Activated CD8-positive, alpha-beta memory T cell treated with anti-CD3 and anti-CD28 coated beads, Interleukin-2, amount 10 ng/mL, durations not matched to agents 7 days and 5 days (primary cell): ENCODE measurements at regions of chr12 and their contacts with region 1.

Region 1: DNA sequence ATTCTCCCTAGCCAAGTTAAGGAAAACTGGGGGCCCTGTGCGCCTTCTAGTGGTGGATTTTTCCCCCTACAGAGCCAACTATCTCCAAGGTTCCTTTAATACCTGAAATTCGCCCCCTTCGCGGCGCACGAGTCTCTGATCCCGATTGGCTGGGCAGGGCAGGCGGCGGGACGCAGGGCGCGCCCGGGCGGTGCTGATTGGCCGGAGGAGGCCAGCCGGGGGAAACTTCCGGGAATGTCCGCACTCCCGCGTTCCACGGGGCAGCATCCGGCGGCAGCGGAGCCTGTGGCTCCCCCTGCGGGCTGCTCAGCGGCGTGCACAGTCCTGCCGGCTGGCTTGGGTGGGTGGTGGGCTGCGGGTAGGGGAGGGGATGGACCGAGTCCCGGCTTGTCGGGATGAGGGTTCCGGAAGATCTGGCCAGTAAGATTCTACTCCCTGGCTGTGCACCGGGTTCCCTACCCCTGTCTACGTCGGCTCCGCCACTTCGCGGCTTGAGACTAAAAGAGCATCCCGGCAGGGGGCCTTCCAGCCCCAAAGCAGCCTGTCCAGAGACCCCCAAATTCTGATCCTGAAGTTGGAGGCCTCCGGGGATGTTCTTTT is at the start of gene NABP2:
- DNase-seq: peak; percentile 97
- ATAC-seq: peak; percentile 85
- H3K4me3 Mint-ChIP-seq: peak within 1 kb of the TSS; percentile 97
- H3K27ac Mint-ChIP-seq: peak within 1 kb of the TSS; percentile 75
- H3K4me1 Mint-ChIP-seq: peaks cover 42% of the 10 kb centered on the region
- H3K27me3 Mint-ChIP-seq: no peaks in the 10 kb centered on the region
- total RNA-seq, gene NABP2: 62.8 to 80.6 TPM

Region 2: GRCh38 chr12:56127888-56128669 is 96.1 kb before region 1 on chr12 and contains the start of gene ESYT1:
- CTCF ChIA-PET with region 1: interaction called, 25 read pairs
- DNase-seq: peak; percentile 100
- ATAC-seq: peak; percentile 91
- H3K4me3 Mint-ChIP-seq: peak within 1 kb of the TSS; percentile 98
- H3K27ac Mint-ChIP-seq: peak within 1 kb of the TSS; percentile 93
- H3K4me1 Mint-ChIP-seq: peaks cover 66% of the 10 kb centered on the region
- H3K27me3 Mint-ChIP-seq: no peaks in the 10 kb centered on the region
- total RNA-seq, gene ESYT1: 225 to 241 TPM

Region 3: GRCh38 chr12:56141946-56142784 is 82.0 kb before region 1 on chr12:
- CTCF ChIA-PET with region 1: no interaction called
- DNase-seq: no peak
- ATAC-seq: no peak
- H3K4me3 Mint-ChIP-seq: no peak overlapping the region
- H3K27ac Mint-ChIP-seq: peak overlapping the region; percentile 44
- H3K4me1 Mint-ChIP-seq: peaks cover 38% of the 10 kb centered on the region
- H3K27me3 Mint-ChIP-seq: no peaks in the 10 kb centered on the region

Region 4: DNA sequence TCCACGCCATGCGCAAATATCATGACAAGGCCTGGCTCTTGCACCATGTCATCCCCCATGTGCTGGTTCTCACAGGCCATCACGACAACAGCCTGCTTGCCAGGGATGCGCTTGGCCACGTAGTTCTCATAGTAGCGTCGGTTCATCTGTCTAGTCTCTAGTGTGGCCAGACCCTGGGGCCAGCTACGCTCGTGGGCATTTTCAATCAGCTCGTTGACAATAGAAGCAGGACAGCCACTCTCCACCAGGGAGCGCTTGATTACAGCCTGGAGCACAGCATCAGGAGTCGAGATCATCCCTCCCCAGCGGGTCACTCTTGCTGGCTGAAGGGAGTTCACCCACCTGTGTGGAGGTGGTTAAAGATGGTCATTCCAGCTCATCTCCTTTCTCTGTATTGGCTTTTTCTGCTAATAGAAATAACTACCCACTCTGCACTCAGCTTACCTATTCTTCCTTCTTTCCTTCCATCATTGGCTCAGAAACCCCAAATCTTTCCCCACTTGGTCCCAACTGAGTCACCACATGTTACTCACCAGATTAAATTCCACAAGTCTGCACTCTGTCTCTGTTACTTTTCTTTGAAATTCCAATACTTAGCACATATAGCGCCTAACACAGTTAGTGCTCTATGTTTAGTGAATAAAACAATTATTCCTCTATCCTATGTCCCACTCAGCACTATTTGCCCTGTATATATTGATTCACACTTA is 17.6 kb before region 1 on chr12:
- CTCF ChIA-PET with region 1: interaction called, 24 read pairs
- DNase-seq: peak; percentile 63
- ATAC-seq: peak; percentile 62
- H3K4me3 Mint-ChIP-seq: no peak overlapping the region
- H3K27ac Mint-ChIP-seq: no peak overlapping the region
- H3K4me1 Mint-ChIP-seq: no peaks in the 10 kb centered on the region
- H3K27me3 Mint-ChIP-seq: no peaks in the 10 kb centered on the region

Region 5: GRCh38 chr12:56258057-56258819 is 34.0 kb after region 1 on chr12 and contains the start of gene ANKRD52:
- CTCF ChIA-PET with region 1: interaction called, 24 read pairs
- DNase-seq: peak; percentile 81
- ATAC-seq: peak; percentile 95
- H3K4me3 Mint-ChIP-seq: peak within 1 kb of the TSS; percentile 90
- H3K27ac Mint-ChIP-seq: peak within 1 kb of the TSS; percentile 88
- H3K4me1 Mint-ChIP-seq: peaks cover 23% of the 10 kb centered on the region
- H3K27me3 Mint-ChIP-seq: peaks cover 3% of the 10 kb centered on the region
- total RNA-seq, gene ANKRD52: 66.9 to 68.3 TPM

Region 6: GRCh38 chr12:56266693-56267442 is 42.7 kb after region 1 on chr12 and contains the start of gene COQ10A:
- CTCF ChIA-PET with region 1: interaction called, 16 read pairs
- DNase-seq: peak; percentile 93
- ATAC-seq: peak; percentile 94
- H3K4me3 Mint-ChIP-seq: peak within 1 kb of the TSS; percentile 85
- H3K27ac Mint-ChIP-seq: peak within 1 kb of the TSS; percentile 89
- H3K4me1 Mint-ChIP-seq: peaks cover 19% of the 10 kb centered on the region
- H3K27me3 Mint-ChIP-seq: no peaks in the 10 kb centered on the region
- total RNA-seq, gene COQ10A: 16.0 to 17.4 TPM

Region 7: GRCh38 chr12:56468216-56469006 is 244.2 kb after region 1 on chr12 and contains the start of gene SPRYD4:
- CTCF ChIA-PET with region 1: interaction called, 13 read pairs
- DNase-seq: peak; percentile 95
- ATAC-seq: peak; percentile 96
- H3K4me3 Mint-ChIP-seq: peak within 1 kb of the TSS; percentile 97
- H3K27ac Mint-ChIP-seq: peak within 1 kb of the TSS; percentile 95
- H3K4me1 Mint-ChIP-seq: peaks cover 29% of the 10 kb centered on the region
- H3K27me3 Mint-ChIP-seq: no peaks in the 10 kb centered on the region
- total RNA-seq, gene SPRYD4: 3.4 to 3.7 TPM